Left cardiac atrium (tissue), 4 donors: ENCODE measurements at regions of chr10 and their contacts with region 1.

Region 1: GRCh38 chr10:74826142-74827044 is at the start of gene KAT6B:
- DNase-seq: peak; percentile 100
- ATAC-seq: peak; percentile 89 to 94
- total RNA-seq, gene KAT6B: 25.2 to 37.0 TPM

Region 2: DNA sequence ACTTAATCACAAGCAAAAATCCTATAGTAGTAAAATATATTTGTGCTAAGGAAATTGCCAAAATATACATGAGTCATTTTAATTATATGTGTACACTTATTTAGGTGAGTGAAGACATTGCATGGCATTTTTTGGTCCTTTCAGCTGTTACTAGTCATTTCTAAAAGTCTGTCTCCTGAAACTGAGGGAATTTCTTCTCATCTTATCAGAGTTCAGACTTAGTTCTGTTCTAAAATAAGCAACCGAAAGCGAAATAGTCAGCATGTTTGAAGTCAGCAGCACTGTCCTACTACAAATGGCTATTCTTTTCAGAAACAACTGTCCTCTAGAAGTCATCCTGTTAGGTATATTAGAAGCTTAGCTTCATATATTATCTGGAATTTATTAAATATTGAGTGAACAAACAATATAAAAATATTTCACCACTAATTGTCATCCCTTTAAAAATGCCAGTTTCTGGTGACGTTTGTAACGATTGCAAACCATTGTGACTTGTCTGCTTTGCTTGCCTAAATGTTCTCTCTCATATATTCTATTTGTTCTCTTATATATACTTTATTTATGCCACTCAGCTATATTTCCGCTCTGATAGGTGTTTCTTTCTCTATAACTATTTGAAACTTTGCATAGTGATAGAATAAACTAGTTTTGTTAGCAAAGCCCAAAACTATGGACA is 227.4 kb before region 1 on chr10:
- intact Hi-C with region 1: loop called in 1 of 2 experiments (anchors 10 kb)
- DNase-seq: no peak
- ATAC-seq: peak; percentile 68 to 72